Dorsolateral prefrontal cortex (tissue), 120 donors: ENCODE measurements at regions of chr2 and their contacts with region 1.

Region 1: GRCh38 chr2:11778923-11779757 is 32.7 kb downstream of the LPIN1 start:
- DNase-seq: peak; percentile 69 to 86 (median 82)
- H3K4me3 ChIP-seq: peak overlapping the region in 30 of 59 donors; percentile 3 to 49 (median 28)
- H3K27ac ChIP-seq: no peak overlapping the region
- H3K27me3 ChIP-seq: no peaks in the 10 kb centered on the region
- CTCF ChIP-seq: peak; percentile 94 to 100 (median 99)

Region 2: GRCh38 chr2:11743846-11744553 is 35.1 kb before region 1 on chr2:
- intact Hi-C with region 1: loop called in 1 of 2 experiments (anchors 2 kb)
- DNase-seq: peak; percentile 71 to 95 (median 89)
- H3K4me3 ChIP-seq: peak overlapping the region in 48 of 59 donors; percentile 0 to 53 (median 25)
- H3K27ac ChIP-seq: peak overlapping the region in 50 of 59 donors; percentile 0 to 89 (median 59)
- H3K27me3 ChIP-seq: no peaks in the 10 kb centered on the region
- CTCF ChIP-seq: peak in 10 of 56 donors; percentile 12 to 32 (median 14)